ENCODE measurements at regions of chr10 and their contacts with region 1.

Region 1: DNA sequence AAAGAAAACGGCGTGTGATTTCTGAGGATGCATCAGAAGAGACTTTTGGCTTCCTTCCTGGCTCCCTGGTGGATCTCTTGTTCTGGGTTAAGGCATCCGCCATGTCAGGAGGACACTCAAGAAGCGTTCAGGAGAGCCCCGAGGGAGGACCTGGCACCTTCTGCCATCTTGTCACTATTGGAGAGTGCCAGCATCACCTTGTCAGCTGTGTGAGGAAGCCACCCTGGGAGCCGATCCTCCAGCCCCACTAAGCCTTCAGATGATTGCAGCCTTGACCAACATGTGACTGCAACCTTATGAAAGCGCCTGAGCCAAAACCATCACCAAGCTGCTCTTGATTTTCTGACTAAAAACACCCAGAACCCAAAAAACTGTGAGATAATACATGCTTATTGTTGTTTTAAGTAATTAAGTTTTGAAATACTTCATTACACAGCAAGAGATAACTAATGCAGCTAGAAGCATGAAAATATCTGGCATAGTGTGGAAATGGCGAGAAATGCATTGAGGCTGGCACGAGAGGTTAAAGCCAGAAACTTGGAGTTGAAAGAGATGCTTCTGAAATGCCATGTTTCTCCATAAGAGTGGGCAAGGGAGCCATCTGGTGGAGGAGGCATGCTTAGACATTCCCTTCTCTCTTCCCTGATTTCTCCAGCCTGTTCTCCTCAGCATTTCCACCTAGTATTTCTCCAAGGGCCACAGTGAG is 5.4 kb upstream of the ZFYVE27 start:
- DNase-seq: peak; percentile 79
- H3K4me3 Mint-ChIP-seq: no peak overlapping the region
- H3K27ac Mint-ChIP-seq: no peak overlapping the region
- H3K4me1 Mint-ChIP-seq: peaks cover 6% of the 10 kb centered on the region
- H3K27me3 Mint-ChIP-seq: no peaks in the 10 kb centered on the region

Region 2: GRCh38 chr10:97676770-97677581 is 54.5 kb before region 1 on chr10:
- CTCF ChIA-PET with region 1: interaction called, 36 read pairs
- intact Hi-C with region 1: loop called (anchors 1 kb)
- DNase-seq: peak; percentile 48
- H3K4me3 Mint-ChIP-seq: no peak overlapping the region
- H3K27ac Mint-ChIP-seq: no peak overlapping the region
- H3K4me1 Mint-ChIP-seq: no peaks in the 10 kb centered on the region
- H3K27me3 Mint-ChIP-seq: no peaks in the 10 kb centered on the region

Region 3: GRCh38 chr10:99013885-99014284 is 1282.4 kb after region 1 on chr10:
- CTCF ChIA-PET with region 1: no interaction called
- intact Hi-C with region 1: no loop called
- DNase-seq: no peak
- H3K4me3 Mint-ChIP-seq: no peak overlapping the region
- H3K27ac Mint-ChIP-seq: no peak overlapping the region
- H3K4me1 Mint-ChIP-seq: no peaks in the 10 kb centered on the region
- H3K27me3 Mint-ChIP-seq: no peaks in the 10 kb centered on the region